PC-3 (cell line): ENCODE measurements at regions of chr1 and their contacts with region 1.

Region 1: GRCh38 chr1:25608488-25609178 is 8.0 kb upstream of the MAN1C1 start:
- DNase-seq: peak; percentile 75
- ATAC-seq: peak; percentile 94
- H3K4me3 ChIP-seq: peak overlapping the region; percentile 66
- H3K27ac ChIP-seq: no peak overlapping the region
- H3K4me1 ChIP-seq: peaks cover 6% of the 10 kb centered on the region; the same call in 1 of the 2 replicates
- H3K27me3 ChIP-seq: peaks cover 3% of the 10 kb centered on the region; the same call in 1 of the 2 replicates
- CTCF ChIP-seq: peak; percentile 58

Region 2: DNA sequence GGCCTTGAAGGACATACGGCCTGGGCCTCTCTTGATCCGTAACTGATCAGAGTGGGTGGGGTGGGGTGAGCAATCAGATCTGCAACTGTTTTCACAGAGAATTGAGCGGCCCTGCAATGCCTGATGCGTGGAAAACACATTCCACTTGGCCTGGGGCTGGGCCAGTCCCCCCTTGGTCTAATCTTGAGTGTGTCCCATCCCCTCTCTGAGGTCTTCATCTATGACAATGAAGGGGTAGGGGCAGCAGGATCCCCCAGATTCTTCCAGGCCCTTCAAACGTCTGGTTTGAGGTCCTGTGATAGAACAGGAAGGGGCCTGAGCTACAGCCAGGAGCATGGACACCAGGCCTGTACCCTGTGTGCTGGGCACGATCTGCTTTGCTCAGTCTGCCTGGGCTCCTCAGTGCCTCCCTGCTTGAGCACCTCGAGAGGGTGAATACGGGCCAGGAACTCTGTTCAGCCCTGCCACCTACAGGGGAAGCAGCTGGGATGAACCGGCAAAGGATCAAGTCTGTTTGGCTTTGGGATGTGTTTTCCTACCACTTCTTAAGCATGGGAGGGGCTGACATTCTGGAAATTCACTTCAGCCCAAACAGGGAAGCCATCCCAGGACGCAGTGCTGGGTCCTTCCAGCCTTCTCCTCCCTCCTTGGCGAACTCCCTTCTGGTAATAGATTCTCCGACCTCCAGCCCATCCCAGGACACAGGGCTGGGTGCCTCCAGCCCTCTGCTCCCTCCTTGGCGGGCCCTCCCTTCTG is 135.4 kb after region 1 on chr1:
- CTCF ChIA-PET with region 1: interaction called, 4 read pairs
- POLR2A ChIA-PET with region 1: no interaction called
- intact Hi-C with region 1: loop called (anchors 2 kb)
- DNase-seq: peak; percentile 60
- ATAC-seq: peak; percentile 96
- H3K4me3 ChIP-seq: no peak overlapping the region
- H3K27ac ChIP-seq: no peak overlapping the region
- H3K4me1 ChIP-seq: no peaks in the 10 kb centered on the region
- H3K27me3 ChIP-seq: peaks cover 8% of the 10 kb centered on the region; the same call in 1 of the 2 replicates
- CTCF ChIP-seq: peak; percentile 58